AG04450 (cell line): ENCODE measurements at regions of chr9 and their contacts with region 1.

Region 1: GRCh38 chr9:35664531-35665470 is at the start of gene ARHGEF39:
- DNase-seq: no peak
- H3K4me3 ChIP-seq: peak within 1 kb of the TSS; percentile 71
- H3K27ac ChIP-seq: peak within 1 kb of the TSS; percentile 11
- H3K27me3 ChIP-seq: no peaks in the 10 kb centered on the region
- CTCF ChIP-seq: peak; percentile 31
- polyA plus RNA-seq, gene ARHGEF39: 1.1 and 1.2 TPM in 2 replicates

Region 2: DNA sequence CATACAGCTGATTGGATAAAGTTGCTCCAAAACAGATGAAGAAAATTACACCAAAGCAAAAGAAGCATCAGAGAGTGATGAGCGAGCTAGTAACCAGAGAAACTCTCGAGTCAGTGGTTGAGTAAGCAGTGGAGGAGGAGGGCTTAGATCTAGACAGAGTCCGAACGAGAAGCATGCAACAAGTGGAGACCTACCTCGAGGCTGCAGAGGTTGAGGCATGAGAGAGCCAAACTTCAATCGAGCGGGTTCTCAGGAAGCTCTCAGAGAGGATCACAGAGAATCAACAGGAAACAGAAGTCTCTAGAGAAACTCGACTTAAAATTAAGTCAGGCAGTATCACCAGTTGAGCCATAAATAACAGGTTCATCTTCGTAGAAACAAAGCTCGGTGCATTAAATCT is 168.8 kb before region 1 on chr9:
- CTCF ChIA-PET with region 1: no interaction called
- POLR2A ChIA-PET with region 1: no interaction called
- DNase-seq: no peak
- H3K4me3 ChIP-seq: no peak overlapping the region
- H3K27ac ChIP-seq: no peak overlapping the region
- H3K27me3 ChIP-seq: no peaks in the 10 kb centered on the region
- CTCF ChIP-seq: no peak

Region 3: GRCh38 chr9:35510745-35511428 is 153.9 kb before region 1 on chr9:
- CTCF ChIA-PET with region 1: no interaction called
- POLR2A ChIA-PET with region 1: no interaction called
- DNase-seq: peak; percentile 91
- H3K4me3 ChIP-seq: peak overlapping the region; percentile 18
- H3K27ac ChIP-seq: peak overlapping the region; percentile 80
- H3K27me3 ChIP-seq: no peaks in the 10 kb centered on the region
- CTCF ChIP-seq: peak; percentile 22; the same call in 1 of the 2 replicates

Region 4: DNA sequence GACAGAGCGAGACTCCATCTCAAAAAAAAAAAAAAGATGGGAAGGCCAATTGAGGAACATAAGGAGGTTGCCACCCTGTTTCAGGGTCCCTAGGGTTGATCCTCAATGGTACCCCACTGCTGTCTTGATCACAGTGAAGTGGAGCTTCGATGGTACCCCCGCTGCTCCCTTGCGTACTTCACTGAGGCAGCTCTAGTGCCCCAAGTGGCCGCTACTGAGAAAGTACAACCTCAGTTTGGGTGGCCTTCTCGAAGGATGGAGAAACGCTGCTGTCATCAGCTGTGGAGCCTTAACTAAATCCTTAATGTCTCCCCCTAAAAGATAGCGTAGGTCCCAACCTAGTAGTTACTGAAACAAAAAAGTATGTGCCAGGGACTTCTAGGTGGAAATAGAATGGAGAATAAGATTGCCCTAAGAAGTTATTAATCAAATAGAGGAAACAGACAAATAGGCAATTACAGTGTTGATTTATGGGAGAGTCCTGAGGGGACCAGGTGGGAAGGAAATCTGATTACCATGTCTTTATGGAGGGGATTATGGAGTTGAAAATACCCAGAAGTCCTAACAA is 53.5 kb before region 1 on chr9:
- CTCF ChIA-PET with region 1: no interaction called
- POLR2A ChIA-PET with region 1: no interaction called
- DNase-seq: no peak
- H3K4me3 ChIP-seq: no peak overlapping the region
- H3K27ac ChIP-seq: no peak overlapping the region
- H3K27me3 ChIP-seq: peaks cover 23% of the 10 kb centered on the region
- CTCF ChIP-seq: peak; percentile 70

Region 5: GRCh38 chr9:35675732-35676392 is 11.1 kb after region 1 on chr9:
- CTCF ChIA-PET with region 1: interaction called, 9 read pairs
- POLR2A ChIA-PET with region 1: interaction called, 28 read pairs
- DNase-seq: no peak
- H3K4me3 ChIP-seq: peak overlapping the region; percentile 51
- H3K27ac ChIP-seq: no peak overlapping the region
- H3K27me3 ChIP-seq: no peaks in the 10 kb centered on the region
- CTCF ChIP-seq: no peak

Region 6: GRCh38 chr9:35690431-35691333 is 25.9 kb after region 1 on chr9:
- CTCF ChIA-PET with region 1: interaction called, 27 read pairs
- POLR2A ChIA-PET with region 1: interaction called, 16 read pairs
- DNase-seq: no peak
- H3K4me3 ChIP-seq: peak overlapping the region; percentile 98
- H3K27ac ChIP-seq: peak overlapping the region; percentile 97
- H3K27me3 ChIP-seq: no peaks in the 10 kb centered on the region
- CTCF ChIP-seq: no peak

Region 7: DNA sequence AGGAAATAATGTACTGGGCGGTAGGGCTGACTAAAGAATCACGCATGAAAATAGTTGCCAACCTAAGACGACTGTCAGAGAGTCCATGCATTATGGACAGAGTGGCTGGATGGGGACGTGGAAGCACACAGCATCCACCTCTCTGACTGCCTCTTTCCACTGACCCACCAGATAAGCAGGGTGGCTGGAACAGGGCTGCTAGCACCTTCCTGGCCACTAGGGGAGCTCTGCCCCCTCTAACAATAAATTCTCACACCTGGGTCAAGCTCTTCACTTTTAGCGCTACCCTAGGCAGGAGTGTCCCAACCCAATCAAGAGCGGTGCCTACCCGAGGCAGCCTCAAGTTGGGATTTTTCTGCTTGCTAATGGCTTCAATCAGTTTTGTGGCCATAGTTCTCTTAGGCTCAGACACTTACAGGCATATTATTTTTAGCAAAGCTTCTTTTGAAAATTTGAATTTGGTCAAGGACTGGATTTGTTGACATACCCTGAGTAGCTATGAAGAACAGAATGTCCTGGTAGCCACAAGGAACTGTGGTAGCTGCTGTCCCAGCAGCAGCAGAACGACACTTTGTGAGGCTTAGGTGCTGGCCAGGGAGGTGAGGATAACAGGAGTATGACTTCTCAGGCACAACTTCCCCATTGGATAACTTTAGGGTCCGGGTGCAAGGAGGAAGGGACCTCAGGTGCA is 31.9 kb after region 1 on chr9:
- CTCF ChIA-PET with region 1: interaction called, 27 read pairs
- POLR2A ChIA-PET with region 1: interaction called, 6 read pairs
- DNase-seq: no peak
- H3K4me3 ChIP-seq: no peak overlapping the region
- H3K27ac ChIP-seq: no peak overlapping the region
- H3K27me3 ChIP-seq: no peaks in the 10 kb centered on the region
- CTCF ChIP-seq: peak; percentile 86